ENCODE measurements at regions of chr5 and their contacts with region 1.

Region 1: GRCh38 chr5:79020861-79021561 is 35.9 kb upstream of the ARSB start:
- DNase-seq: peak; percentile 75

Region 2: DNA sequence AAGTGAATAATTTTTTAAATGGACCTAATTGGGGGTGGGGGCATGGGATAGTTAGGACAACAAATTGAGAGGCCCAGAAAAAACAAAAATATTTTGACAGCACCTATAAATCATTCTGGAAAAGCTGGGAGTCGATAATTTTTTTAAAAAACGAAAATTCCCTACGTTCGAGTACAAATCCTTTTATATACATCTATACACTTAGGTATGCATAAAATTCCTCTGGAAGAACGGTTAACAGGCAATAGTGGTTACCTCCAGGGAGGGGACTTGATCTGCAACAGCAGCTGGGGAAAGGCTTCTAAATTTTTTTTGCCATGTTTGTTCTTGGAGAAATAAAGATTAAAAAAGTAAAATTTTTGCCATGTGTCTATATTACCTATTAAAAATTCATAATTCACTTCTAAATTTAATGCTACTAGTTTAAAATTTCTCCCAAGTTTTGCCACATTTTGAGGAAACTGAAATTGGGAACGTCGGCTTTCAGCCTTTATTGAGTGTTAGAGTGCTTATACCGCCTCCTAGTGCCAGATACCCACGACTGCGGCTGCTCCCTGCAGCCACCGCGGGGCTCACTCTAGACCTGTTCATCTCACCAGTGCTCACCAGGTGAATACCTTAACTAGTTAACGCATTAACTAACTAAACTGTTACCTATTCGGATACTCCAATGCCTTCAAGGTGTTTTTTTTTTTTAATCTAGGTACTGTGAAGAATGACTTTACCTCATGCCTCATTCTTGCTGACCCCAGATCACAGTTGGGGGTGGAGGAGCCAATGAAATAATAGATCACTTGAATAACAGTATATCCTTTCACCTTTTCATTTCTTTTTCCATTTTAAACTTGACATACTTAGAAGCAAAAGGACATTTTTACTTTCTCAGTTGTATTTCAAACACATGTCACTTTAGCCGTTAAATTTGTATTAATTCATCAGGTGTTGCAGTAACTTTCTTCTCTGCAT is 88.8 kb after region 1 on chr5:
- in situ Hi-C with region 1: loop called (anchors 25 kb)
- DNase-seq: peak; percentile 61

Region 3: DNA sequence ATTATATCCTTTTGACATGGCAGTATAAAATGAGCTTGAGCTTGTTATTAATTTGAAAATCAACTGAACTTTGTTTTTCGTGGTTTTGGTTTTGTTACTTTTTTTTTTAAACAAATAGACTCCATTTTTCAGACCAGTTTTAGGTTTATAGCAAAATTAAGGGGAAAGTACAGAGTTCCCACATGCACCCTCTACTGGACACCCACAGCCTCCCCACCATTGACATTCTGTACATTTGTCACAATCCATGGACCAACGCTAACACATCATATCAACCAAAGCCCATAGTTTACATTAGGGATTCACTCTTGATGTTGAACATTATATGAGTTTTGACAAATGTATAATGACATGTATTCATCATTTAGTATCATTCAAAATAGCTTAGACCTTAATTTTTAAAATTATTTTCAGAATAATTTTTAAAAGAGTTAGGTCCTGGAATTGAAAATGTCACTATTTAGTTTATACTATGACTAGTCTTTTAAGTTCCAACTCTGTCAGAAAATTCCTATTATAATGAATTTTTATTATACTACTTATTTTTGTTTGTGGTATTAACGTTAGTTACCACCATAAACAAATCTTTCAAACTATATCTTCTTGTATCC is 179.7 kb after region 1 on chr5:
- in situ Hi-C with region 1: no loop called
- DNase-seq: peak; percentile 38

Region 4: GRCh38 chr5:79464695-79465332 is 443.8 kb after region 1 on chr5:
- in situ Hi-C with region 1: loop called (anchors 25 kb)
- DNase-seq: peak; percentile 43

Measured in KBM-7 (cell line).